ENCODE measurements at regions of chr17 and their contacts with region 1.

Region 1: GRCh38 chr17:49407981-49408501 is 6.6 kb downstream of the PHB1 start:
- DNase-seq: peak; percentile 82
- ATAC-seq: peak; percentile 99
- H3K4me3 Mint-ChIP-seq: no peak overlapping the region
- H3K27ac Mint-ChIP-seq: no peak overlapping the region
- H3K4me1 Mint-ChIP-seq: peaks cover 34% of the 10 kb centered on the region
- H3K27me3 Mint-ChIP-seq: no peaks in the 10 kb centered on the region
- CTCF ChIP-seq: no peak

Region 2: DNA sequence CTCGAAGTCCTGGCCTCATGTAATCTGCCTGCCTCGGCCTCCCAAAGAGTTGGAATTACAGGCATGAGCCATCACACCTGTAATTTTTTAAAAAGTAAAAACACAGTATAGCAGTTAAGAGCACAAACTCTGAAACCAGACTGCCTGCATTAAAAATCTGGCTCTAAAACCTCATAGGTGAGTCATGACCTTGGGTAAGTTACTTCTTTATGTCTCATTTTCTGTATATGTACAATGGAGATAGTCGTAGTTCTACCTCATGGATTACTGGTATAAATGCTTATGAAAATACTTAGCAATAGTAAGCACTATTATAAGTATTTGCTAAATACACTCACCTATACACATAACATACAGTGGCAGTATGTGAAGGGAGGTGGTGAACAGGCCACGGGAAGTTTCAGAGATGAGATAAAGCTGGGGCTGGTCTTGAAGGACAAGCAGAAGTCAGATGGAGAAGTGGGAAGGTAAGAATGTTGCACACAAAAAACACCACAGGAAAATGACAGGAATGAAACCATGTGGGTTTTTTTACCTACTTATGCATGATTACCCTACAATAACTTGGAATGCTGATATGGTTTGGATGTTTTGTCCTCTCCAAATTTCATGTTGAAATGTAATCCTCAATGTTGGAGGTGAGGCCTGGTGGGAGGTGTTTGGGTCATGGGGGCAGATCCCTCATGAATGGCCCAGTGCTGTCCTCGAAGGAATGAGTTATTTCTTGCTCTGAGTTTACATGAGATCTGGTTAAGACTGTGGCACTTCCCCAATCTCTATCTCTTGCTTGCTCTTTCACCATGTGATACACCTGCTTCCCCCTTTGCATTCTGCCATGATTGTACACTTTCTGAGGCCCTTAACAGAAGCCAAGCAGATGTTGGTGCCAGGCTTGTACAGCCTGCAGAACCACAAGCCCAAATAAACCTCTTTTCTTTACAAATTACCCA is 79.9 kb before region 1 on chr17:
- CTCF ChIA-PET with region 1: no interaction called
- POLR2A ChIA-PET with region 1: no interaction called
- intact Hi-C with region 1: no loop called
- DNase-seq: no peak
- ATAC-seq: peak; percentile 95
- H3K4me3 Mint-ChIP-seq: no peak overlapping the region
- H3K27ac Mint-ChIP-seq: peak overlapping the region; percentile 81
- H3K4me1 Mint-ChIP-seq: peaks cover 44% of the 10 kb centered on the region
- H3K27me3 Mint-ChIP-seq: no peaks in the 10 kb centered on the region
- CTCF ChIP-seq: no peak

Region 3: GRCh38 chr17:49343273-49343672 is 64.8 kb before region 1 on chr17:
- CTCF ChIA-PET with region 1: no interaction called
- POLR2A ChIA-PET with region 1: interaction called, 11 read pairs
- intact Hi-C with region 1: no loop called
- DNase-seq: no peak
- ATAC-seq: peak; percentile 30
- H3K4me3 Mint-ChIP-seq: peak overlapping the region; percentile 72
- H3K27ac Mint-ChIP-seq: peak overlapping the region; percentile 89
- H3K4me1 Mint-ChIP-seq: peaks cover 65% of the 10 kb centered on the region
- H3K27me3 Mint-ChIP-seq: no peaks in the 10 kb centered on the region
- CTCF ChIP-seq: no peak

Region 4: GRCh38 chr17:49397586-49397985 is 10.5 kb before region 1 on chr17:
- CTCF ChIA-PET with region 1: interaction called, 11 read pairs
- POLR2A ChIA-PET with region 1: no interaction called
- intact Hi-C with region 1: no loop called
- DNase-seq: no peak
- ATAC-seq: no peak
- H3K4me3 Mint-ChIP-seq: no peak overlapping the region
- H3K27ac Mint-ChIP-seq: no peak overlapping the region
- H3K4me1 Mint-ChIP-seq: peaks cover 22% of the 10 kb centered on the region
- H3K27me3 Mint-ChIP-seq: no peaks in the 10 kb centered on the region
- CTCF ChIP-seq: no peak

Region 5: DNA sequence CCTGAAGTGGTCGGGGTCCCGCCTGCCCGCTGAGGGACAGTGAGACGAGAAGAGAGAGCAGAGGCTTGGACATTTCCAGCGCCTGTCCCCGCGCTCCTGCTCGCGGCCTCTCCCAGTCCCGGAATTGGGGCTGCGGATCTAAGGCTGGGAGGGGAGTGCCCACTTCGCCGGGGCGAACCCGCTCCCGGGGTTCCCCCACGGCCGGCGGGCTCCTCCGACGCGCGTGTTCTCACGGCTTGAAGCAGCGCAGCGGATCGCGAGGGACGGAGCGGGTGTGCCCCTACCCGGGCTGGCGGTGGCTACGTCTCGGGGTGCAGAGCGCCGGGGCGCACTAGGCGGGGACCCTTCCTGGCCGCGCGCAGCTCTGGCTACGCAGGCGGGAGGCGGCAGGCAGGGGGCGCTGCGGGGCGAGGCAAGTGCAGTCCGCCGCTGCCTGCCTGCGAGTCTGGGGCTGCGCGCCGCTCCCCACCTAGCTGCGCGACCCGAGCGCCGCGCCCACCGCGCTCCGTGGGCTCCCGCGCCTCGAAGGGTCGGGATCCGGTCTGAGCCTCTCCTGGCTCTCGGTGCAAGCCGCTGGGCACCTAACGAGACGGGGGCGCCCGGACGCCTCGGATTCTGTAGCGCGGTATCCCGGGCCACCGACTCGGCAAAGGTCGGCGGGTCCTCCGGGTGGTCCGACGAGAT is 88.3 kb after region 1 on chr17:
- CTCF ChIA-PET with region 1: no interaction called
- POLR2A ChIA-PET with region 1: no interaction called
- intact Hi-C with region 1: loop called (anchors 2 kb)
- DNase-seq: peak; percentile 86
- ATAC-seq: peak; percentile 73
- H3K4me3 Mint-ChIP-seq: peak overlapping the region; percentile 81
- H3K27ac Mint-ChIP-seq: no peak overlapping the region
- H3K4me1 Mint-ChIP-seq: peaks cover 34% of the 10 kb centered on the region
- H3K27me3 Mint-ChIP-seq: peaks cover 33% of the 10 kb centered on the region
- CTCF ChIP-seq: peak; percentile 22

Region 6: DNA sequence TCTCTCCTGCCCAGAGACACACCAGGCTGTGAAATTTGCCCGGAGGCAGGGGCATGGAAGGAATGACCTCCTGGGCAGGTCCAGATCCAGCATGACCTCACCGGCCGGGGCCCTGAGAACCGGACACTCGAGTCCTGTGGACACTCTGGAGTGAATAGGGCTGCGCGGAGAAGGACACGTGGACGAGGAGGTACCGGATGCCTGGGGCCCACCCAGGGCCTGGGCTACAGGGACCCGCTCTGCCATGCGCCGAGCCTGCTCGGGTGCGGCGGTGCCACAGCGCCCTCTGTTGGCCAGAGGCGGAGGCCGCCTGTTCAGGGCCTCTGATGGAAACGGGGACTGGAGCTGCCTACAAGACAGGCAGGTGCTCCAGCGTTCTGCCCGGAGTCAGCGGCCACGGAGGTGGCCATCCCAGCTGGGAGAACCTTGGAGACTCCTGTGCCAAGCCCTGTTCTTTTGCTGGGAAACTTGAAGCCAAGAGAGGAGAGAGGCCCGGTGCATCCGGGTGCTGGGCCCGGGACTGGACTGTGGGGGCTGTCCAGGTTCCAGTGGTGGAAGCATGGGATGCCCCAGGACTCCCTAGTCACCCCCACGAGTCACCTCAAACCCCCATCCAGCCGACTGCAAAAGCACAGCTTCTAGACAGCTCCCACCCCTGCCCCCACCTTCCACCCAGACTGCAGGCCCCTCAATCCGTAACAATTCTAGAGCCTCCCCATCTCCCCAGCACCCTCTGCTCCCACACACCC is 148.4 kb after region 1 on chr17:
- CTCF ChIA-PET with region 1: interaction called, 125 read pairs
- POLR2A ChIA-PET with region 1: no interaction called
- intact Hi-C with region 1: loop called (anchors 1 kb)
- DNase-seq: peak; percentile 86
- ATAC-seq: peak; percentile 98
- H3K4me3 Mint-ChIP-seq: no peak overlapping the region
- H3K27ac Mint-ChIP-seq: peak overlapping the region; percentile 35
- H3K4me1 Mint-ChIP-seq: no peaks in the 10 kb centered on the region
- H3K27me3 Mint-ChIP-seq: peaks cover 8% of the 10 kb centered on the region
- CTCF ChIP-seq: peak; percentile 40

Region 7: GRCh38 chr17:50258647-50259476 is 850.8 kb after region 1 on chr17:
- CTCF ChIA-PET with region 1: no interaction called
- POLR2A ChIA-PET with region 1: interaction called, 10 read pairs
- intact Hi-C with region 1: no loop called
- DNase-seq: no peak
- ATAC-seq: no peak
- H3K4me3 Mint-ChIP-seq: no peak overlapping the region
- H3K27ac Mint-ChIP-seq: no peak overlapping the region
- H3K4me1 Mint-ChIP-seq: no peaks in the 10 kb centered on the region
- H3K27me3 Mint-ChIP-seq: peaks cover 30% of the 10 kb centered on the region
- CTCF ChIP-seq: no peak